GM10248 (cell line): ENCODE measurements at regions of chr1 and their contacts with region 1.

Region 1: GRCh38 chr1:26705788-26706311 is 10.0 kb downstream of the ARID1A start:
- DNase-seq: no peak
- CTCF ChIP-seq: no peak

Region 2: GRCh38 chr1:26666855-26667254 is 39.0 kb before region 1 on chr1:
- CTCF ChIA-PET with region 1: no interaction called
- POLR2A ChIA-PET with region 1: no interaction called
- DNase-seq: no peak
- CTCF ChIP-seq: no peak

Region 3: GRCh38 chr1:26695356-26696118 is 10.3 kb before region 1 on chr1 and contains the start of gene ARID1A:
- CTCF ChIA-PET with region 1: interaction called, 14 read pairs
- POLR2A ChIA-PET with region 1: interaction called, 11 read pairs
- DNase-seq: peak; percentile 86
- CTCF ChIP-seq: no peak